Activated naive CD4-positive, alpha-beta T cell treated with anti-CD3 and anti-CD28 coated beads, Interleukin-2, amount 10 ng/mL, durations not matched to agents 7 days and 5 days (primary cell): ENCODE measurements at regions of chr2 and their contacts with region 1.

Region 1: GRCh38 chr2:19347619-19348562 is 10.5 kb downstream of the OSR1 start:
- DNase-seq: peak; percentile 97
- H3K4me3 Mint-ChIP-seq: peak overlapping the region; percentile 94
- H3K27ac Mint-ChIP-seq: peak overlapping the region; percentile 96
- H3K4me1 Mint-ChIP-seq: peaks cover 29% of the 10 kb centered on the region
- H3K27me3 Mint-ChIP-seq: peaks cover 53% of the 10 kb centered on the region

Region 2: DNA sequence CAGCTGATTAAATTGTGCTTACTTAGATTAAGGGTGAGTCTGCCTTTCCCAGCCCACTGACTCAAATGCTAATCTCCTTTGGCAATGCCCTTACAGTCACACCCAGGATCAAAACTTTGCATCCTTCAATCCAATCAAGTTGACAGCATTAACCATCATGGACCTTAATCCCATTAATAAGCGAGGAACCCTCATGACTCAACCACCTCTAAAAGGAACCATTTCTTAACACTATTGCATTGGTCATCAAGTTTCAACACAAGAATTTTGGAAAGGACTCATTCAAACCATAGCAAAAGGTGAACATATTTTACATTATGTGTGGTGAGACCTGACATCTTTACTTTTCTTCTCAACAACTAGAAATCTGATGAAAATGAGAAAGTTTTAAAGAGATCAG is 176.5 kb before region 1 on chr2:
- CTCF ChIA-PET with region 1: no interaction called
- DNase-seq: no peak
- H3K4me3 Mint-ChIP-seq: no peak overlapping the region
- H3K27ac Mint-ChIP-seq: no peak overlapping the region
- H3K4me1 Mint-ChIP-seq: no peaks in the 10 kb centered on the region
- H3K27me3 Mint-ChIP-seq: no peaks in the 10 kb centered on the region

Region 3: DNA sequence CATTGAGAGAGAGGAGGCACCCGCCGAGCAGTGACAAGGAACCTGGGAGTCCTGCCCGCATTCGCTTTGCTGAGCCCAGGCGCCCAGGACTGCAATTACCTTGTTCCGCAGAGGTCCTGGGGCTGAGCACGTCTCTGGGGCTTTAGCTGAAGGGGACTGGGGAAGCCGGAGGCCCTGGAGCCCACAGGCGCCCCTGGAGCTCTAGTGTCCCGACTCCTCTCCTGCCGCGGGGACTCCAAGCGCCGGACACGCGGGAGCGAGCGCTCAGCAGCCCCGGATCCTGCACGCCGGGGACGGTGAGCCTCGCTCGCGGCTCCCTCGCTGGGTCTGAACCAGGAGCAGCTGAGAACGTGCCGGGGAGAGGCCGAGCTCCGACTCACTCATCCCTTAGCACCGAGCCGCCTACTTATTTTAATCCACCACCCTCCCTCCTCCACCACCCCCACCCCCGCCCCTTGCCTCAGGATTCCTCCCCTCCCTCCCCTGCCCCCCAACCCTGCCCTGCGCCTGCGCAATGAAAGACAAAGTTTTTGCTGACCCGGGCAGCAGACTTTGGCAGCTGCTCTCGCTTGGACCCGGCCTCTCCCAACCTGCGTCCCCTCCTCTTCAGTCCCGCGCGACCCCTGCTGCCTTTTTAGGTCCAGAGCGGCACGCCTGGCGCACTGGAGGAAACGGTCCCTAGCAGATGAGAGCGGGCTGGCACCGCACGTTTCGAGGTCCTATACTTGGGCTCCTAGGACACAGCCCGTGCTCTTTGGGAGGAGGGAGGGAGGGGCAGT is 10.5 kb after region 1 on chr2 and contains the start of gene OSR1:
- CTCF ChIA-PET with region 1: interaction called, 17 read pairs
- DNase-seq: no peak
- H3K4me3 Mint-ChIP-seq: peak within 1 kb of the TSS; percentile 18
- H3K27ac Mint-ChIP-seq: peak within 1 kb of the TSS; percentile 42
- H3K4me1 Mint-ChIP-seq: peaks cover 44% of the 10 kb centered on the region
- H3K27me3 Mint-ChIP-seq: peaks cover 100% of the 10 kb centered on the region

Region 4: GRCh38 chr2:19863303-19864041 is 515.6 kb after region 1 on chr2:
- CTCF ChIA-PET with region 1: interaction called, 36 read pairs
- DNase-seq: peak; percentile 74
- H3K4me3 Mint-ChIP-seq: no peak overlapping the region
- H3K27ac Mint-ChIP-seq: no peak overlapping the region
- H3K4me1 Mint-ChIP-seq: peaks cover 11% of the 10 kb centered on the region
- H3K27me3 Mint-ChIP-seq: peaks cover 25% of the 10 kb centered on the region

Region 5: DNA sequence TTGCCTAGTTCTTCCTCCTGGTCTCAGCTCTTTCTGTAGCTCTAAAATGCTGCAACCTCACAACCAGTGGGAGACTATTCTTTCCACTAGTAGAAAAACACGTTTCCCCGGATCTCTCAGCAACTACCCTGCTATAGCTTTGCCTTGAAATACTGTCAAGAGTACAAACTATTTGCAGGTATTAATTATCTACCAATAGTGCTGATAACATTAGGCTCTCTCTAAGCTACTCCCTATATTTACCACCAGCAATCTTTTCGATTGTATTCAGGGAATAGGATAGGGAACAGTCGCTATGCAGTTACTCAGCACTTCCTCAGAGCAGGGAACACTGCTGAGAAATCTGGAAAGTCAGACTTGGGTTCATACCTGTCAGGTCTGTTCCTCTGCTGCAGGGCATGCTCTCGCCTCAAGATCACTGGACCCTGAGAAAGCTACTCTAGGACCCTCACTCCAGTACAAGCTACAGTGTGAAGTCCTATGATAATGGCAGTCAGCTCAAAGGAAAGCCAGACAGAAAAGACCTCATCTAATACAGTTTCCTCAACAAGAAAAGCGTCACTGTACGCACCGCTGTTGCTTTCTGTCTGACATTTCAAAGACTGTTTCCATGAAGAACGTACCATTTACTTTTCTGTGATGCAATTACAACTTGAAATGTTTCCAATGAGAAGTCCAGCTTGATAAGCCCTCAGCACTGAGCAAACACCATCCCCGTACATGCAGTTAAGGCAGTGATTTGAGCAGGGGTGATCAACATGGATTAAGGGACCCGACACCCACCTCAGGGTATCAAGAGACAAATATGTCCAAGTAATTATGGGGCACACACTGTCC is 1341.8 kb after region 1 on chr2:
- CTCF ChIA-PET with region 1: no interaction called
- DNase-seq: no peak
- H3K4me3 Mint-ChIP-seq: no peak overlapping the region
- H3K27ac Mint-ChIP-seq: no peak overlapping the region
- H3K4me1 Mint-ChIP-seq: no peaks in the 10 kb centered on the region
- H3K27me3 Mint-ChIP-seq: no peaks in the 10 kb centered on the region